IMR-90 (cell line): ENCODE measurements at regions of chr17 and their contacts with region 1.

Region 1: DNA sequence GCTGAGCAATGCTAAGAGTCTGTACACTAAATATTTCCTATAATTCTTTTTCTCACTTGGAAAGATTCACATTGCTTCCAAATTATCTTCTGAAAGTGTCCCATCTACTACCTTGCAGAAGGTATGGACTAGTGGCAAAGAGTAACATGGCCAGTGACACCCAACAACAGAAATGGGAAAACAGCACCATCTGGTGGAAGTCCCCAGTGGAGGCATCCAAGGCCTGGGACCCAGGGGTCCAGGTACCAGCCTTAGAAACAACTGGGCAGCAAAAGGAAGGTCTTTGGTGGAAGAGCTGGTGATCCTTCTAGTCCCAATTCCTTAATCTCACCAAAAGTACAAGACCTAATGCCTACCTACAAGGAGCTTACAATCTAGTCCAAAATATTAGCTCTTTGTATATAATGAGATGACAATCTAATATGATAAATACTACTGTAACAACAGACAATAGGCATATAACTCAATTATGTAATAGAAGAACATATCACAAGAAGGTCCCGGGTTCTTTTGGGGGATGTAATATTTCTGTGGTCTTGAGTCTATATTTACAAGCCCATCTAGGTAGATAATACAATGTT is 55.3 kb downstream of the SKAP1 start:
- DNase-seq: no peak
- ATAC-seq: no peak
- H3K4me3 ChIP-seq: no peak overlapping the region
- H3K27ac ChIP-seq: no peak overlapping the region
- H3K4me1 ChIP-seq: no peaks in the 10 kb centered on the region
- H3K27me3 ChIP-seq: peaks cover 48% of the 10 kb centered on the region
- CTCF ChIP-seq: 0 out of 2 replicates have a peak, but pooled peaks have one; percentile 12
- POLR2A ChIP-seq: no peak
- RAD21 ChIP-seq: no peak

Region 2: DNA sequence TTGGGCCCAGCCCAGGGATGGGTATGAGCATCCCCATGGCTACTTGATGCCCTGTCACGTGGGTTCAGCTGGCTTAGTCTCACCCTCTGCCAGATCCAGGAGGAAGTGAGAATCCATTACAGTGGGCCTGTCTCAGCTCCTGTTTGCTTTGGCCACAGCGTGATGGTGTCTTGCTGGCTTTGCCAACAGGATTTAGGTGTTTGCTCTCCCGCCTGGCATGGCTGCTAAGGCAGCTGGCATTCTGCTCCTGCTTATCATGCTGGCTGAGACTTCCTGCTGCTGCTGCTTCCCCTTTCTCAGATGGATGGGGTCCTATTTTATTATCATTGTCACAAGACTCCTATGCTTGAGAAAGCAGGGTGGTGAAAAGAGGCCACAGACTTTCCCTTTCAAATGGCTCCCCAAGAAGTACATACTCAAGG is 382.1 kb after region 1 on chr17:
- CTCF ChIA-PET with region 1: no interaction called
- POLR2A ChIA-PET with region 1: no interaction called
- dilution Hi-C with region 1: no loop called
- in situ Hi-C with region 1: loop called (anchors 25 kb)
- intact Hi-C with region 1: no loop called
- DNase-seq: no peak
- ATAC-seq: no peak
- H3K4me3 ChIP-seq: no peak overlapping the region
- H3K27ac ChIP-seq: no peak overlapping the region
- H3K4me1 ChIP-seq: no peaks in the 10 kb centered on the region
- H3K27me3 ChIP-seq: peaks cover 85% of the 10 kb centered on the region
- CTCF ChIP-seq: no peak
- POLR2A ChIP-seq: no peak
- RAD21 ChIP-seq: no peak